Common myeloid progenitor, CD34-positive (primary cell): ENCODE measurements at regions of chr6 and their contacts with region 1.

Region 1: DNA sequence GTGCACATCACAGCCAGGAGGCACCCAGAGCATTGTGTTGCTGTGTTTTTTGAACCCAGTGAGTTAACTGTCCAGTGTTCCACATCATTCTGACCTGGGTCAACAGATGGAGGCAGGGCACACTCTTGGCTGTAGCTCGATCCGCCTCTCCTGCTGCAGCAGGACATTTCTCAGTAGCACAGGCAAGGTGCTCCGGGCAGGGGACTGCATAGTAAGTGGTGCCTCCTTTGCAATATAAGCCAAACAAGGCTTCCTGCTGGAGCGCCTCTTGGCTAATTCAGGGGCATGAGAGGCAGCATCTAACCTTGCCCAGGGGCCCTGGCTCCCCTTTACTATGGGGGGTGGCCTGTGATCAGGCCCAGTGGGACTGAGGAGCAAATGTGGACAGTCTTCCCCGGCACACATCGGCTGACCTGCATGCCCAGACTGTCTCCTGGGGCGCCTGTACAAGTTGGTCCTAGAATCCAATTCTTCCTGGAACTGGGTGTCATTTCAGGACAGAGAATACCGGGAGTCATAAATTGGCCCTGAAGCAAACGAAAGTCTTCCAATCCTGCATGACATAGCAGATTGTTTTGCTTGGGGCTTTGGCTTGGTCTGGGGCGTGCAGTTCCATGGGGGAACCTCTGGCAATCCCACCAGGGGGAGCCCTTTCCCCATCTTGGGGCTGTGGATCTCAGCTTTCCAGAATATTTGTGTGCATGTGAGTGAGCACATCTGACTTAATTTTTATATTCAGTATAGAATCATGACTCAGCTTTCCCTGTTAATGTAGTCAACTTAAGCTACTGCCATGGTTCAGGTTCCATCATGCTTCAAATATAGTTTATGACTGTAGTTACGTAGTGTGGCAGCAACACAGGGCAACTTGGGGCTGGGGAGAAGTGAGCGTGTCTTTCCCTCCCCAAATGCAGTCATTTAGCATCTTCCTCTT is 56.0 kb upstream of the DDR1 start:
- DNase-seq: peak; percentile 80 to 90 (median 88)
- H3K4me3 ChIP-seq: peak overlapping the region in 1 of 7 experiments; percentile 33
- H3K27ac ChIP-seq: peak overlapping the region in 1 of 2 experiments; percentile 15
- H3K4me1 ChIP-seq: peaks cover 9 to 41% (median 35%) of the 10 kb centered on the region in 4 experiments
- H3K27me3 ChIP-seq: peaks cover 0 to 3% (median 0%) of the 10 kb centered on the region in 5 experiments

Region 2: DNA sequence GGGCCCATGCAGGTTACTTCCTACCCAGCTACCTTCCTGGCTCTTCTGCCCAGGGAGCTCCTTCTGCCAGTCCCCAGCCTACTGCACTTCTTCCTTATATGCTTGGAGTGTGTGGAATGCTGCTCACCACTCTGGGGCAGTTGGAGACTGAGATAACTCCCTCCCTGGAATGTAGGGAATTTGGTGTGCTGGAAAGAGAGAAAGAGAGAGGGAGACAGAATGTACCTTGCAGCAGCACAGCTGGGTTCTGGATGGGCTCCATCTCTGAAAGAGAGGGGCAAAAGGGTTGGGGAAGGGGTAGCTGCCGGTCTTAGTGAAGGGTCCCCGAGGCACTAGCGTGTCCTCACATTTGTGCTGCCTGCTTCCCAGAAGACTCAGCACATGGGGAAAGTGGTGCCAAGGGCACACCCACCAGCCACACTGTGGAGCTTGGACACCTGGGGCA is 15.8 kb after region 1 on chr6:
- CTCF ChIA-PET with region 1: interaction called, 13 read pairs
- POLR2A ChIA-PET with region 1: no interaction called
- DNase-seq: no peak
- H3K4me3 ChIP-seq: no peak overlapping the region
- H3K27ac ChIP-seq: no peak overlapping the region
- H3K4me1 ChIP-seq: peaks cover 0 to 23% (median 7%) of the 10 kb centered on the region in 4 experiments
- H3K27me3 ChIP-seq: no peaks in the 10 kb centered on the region

Region 3: DNA sequence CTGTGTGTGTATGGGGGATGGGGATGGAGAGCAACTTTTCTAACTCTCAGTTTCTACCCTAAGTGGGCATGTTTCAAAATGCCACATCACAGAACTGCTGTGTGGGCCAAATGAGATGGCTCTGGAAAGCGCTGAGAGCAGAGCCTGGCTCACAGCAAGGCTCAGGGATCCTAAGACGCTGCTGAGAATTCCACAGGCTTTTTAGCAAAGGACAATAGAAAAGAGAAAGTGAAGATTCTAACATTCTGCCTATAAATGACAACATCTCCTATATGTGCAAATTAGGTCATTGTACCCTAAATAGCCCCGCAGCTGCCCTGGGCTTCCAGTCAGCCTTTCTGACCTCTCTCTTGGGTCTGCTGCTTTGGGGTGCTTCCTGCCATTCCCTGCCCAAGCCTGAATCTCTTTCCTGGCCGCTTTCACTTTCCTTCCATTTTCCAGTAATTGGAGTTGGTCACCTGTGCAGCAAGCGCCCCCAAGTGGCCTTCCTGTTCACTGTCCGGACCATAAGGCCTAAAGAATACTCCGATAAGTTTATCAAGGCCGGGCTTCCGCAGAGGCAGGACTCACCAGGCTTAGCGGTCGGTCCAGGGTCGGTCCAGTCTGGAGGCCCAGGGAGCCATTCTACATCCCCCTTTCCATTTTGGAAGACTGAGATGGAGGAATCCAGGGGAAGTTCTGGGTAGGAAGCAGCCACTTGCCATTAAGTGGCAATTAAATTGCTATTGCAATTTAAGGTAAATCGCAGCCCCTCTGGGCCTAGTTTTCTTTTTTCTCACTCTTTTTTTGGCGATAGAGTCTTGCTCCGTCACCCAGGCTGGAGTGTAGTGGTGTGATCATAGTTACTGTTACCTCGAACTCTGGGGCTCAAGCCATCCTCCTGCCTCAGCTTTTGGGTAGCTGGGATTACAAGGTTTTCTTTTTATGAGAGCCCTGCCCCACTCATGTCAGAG is 49.4 kb after region 1 on chr6:
- CTCF ChIA-PET with region 1: interaction called, 95 read pairs
- POLR2A ChIA-PET with region 1: no interaction called
- DNase-seq: peak; percentile 75 to 78 (median 76)
- H3K4me3 ChIP-seq: peak overlapping the region in 6 of 7 experiments; percentile 30 to 83 (median 52)
- H3K27ac ChIP-seq: peak overlapping the region in 1 of 2 experiments; percentile 77
- H3K4me1 ChIP-seq: peaks cover 0 to 8% (median 6%) of the 10 kb centered on the region in 4 experiments
- H3K27me3 ChIP-seq: peaks cover 0 to 10% (median 2%) of the 10 kb centered on the region in 5 experiments

Region 4: GRCh38 chr6:30942338-30943060 is 114.2 kb after region 1 on chr6:
- CTCF ChIA-PET with region 1: no interaction called
- POLR2A ChIA-PET with region 1: no interaction called
- DNase-seq: peak; percentile 28 to 39 (median 37)
- H3K4me3 ChIP-seq: no peak overlapping the region
- H3K27ac ChIP-seq: no peak overlapping the region
- H3K4me1 ChIP-seq: no peaks in the 10 kb centered on the region
- H3K27me3 ChIP-seq: peaks cover 0 to 53% (median 13%) of the 10 kb centered on the region in 5 experiments